OCI-LY7 (cell line): ENCODE measurements at regions of chr19 and their contacts with region 1.

Region 1: DNA sequence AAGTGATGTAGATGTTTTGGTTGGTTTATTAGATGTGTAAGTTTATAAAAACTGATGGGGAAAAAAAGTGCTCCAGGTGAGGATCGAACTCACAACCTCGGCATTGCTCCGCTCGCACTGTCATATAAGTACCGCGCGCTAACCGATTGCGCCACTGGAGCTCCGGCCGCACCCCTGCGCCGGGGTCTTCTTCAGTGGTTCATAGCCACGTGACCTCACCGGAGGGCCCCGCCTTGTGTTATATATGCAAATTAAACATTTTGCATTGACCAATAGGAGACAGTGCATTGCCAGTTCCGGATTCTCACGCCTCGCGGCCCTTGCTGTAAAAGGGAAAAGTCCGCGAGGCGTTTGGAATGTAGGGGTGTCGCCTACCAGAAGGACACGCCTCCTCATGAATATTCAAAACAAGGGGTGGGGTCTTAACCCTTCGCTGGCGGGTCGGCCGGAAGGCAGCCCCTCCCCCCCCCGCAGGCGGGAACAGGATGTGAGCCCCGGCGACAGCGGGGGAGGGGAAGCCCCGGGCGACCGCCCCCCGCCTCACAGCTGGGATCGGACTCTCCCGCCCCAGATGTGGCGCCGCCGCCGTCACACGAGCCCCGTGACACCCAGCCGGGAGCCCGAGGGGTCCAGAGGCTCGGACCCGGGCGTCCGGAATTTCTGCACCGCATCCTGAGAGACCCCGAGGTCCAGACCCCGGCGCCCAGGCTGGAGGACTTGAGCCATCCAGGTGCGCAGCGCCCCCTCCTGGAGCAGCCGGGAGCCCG is at the start of gene PLEKHG2:
- DNase-seq: peak; percentile 100
- H3K4me3 ChIP-seq: peak within 1 kb of the TSS; percentile 89
- H3K27ac ChIP-seq: peak within 1 kb of the TSS; percentile 91
- H3K4me1 ChIP-seq: peaks cover 33% of the 10 kb centered on the region
- CTCF ChIP-seq: peak; percentile 93
- total RNA-seq, gene PLEKHG2: 28.3 and 30.4 TPM in 2 replicates

Region 2: GRCh38 chr19:39125554-39126311 is 286.6 kb before region 1 on chr19 and contains the start of gene PAK4:
- CTCF ChIA-PET with region 1: no interaction called
- POLR2A ChIA-PET with region 1: no interaction called
- intact Hi-C with region 1: loop called (anchors 1 kb)
- DNase-seq: peak; percentile 98
- H3K4me3 ChIP-seq: peak within 1 kb of the TSS; percentile 77
- H3K27ac ChIP-seq: peak within 1 kb of the TSS; percentile 55
- H3K4me1 ChIP-seq: peaks cover 20% of the 10 kb centered on the region
- CTCF ChIP-seq: no peak
- total RNA-seq, gene PAK4: 7.8 and 8.1 TPM in 2 replicates

Region 3: DNA sequence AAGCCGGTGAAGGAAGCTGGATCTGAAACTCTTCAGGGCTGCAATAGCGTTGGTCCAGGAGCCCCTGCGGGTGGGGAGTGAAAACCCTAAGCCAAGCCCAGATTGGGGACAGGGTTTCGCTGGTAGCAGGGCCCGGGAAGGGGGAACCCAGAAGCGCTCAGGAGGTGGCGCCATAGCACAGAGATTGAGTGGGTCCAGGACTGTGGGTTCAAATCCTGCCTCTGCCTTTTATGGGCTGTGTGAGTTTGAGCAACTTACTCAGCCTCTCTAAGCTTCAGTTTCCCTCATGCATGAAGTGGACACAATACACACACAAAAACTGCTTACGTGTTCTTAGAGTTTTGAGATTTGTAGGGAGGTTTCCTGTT is 199.9 kb before region 1 on chr19:
- CTCF ChIA-PET with region 1: no interaction called
- POLR2A ChIA-PET with region 1: no interaction called
- intact Hi-C with region 1: loop called (anchors 1 kb)
- DNase-seq: peak; percentile 62
- H3K4me3 ChIP-seq: no peak overlapping the region
- H3K27ac ChIP-seq: no peak overlapping the region
- H3K4me1 ChIP-seq: no peaks in the 10 kb centered on the region
- CTCF ChIP-seq: peak; percentile 78

Region 4: DNA sequence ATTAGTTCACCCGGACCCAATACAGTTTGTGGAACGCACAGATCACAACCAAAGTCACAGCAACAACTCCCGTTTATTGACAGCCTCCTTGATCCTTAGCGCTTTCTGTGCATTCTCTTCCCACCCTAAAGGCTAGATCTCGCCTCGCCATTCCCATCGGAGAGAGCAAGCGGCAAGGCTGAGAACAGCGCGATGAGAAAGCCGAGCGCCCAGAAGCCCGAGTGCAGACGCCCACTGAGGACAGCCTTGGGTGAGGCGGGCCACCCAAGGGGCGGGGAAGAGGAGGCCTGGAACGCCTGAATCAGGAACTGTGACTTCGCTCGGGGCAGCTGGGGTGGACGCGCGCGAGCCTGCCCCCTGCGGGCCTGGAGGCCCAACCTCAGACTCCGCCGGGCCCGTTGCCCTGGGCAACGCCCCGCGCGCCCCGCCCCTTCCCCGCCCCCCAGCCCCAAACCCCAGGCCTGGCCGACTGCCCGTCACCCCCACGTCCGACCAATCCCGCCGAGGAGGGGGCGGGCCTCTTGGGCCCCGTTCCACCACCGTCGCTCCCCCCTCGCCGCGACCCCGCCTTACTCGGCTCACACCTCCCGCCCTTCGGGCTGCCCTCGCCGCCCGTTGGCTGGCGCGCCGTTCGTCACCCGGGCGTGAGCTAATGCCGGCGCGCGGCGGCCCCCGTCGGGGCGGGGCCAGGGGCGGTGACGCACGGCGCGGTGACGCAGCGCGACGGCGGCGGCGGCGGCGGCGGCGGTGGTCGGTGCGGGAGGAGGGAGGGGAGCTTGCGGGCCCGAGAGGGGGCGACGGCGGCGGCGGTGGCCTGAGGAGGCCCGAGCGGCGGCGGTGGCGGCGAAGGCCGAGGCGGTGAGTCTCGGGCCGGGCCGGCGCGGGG is 70.3 kb before region 1 on chr19 and contains the start of gene SAMD4B:
- CTCF ChIA-PET with region 1: no interaction called
- POLR2A ChIA-PET with region 1: interaction called, 3 read pairs
- intact Hi-C with region 1: loop called (anchors 1 kb)
- DNase-seq: peak; percentile 99
- H3K4me3 ChIP-seq: peak within 1 kb of the TSS; percentile 96
- H3K27ac ChIP-seq: peak within 1 kb of the TSS; percentile 71
- H3K4me1 ChIP-seq: peaks cover 48% of the 10 kb centered on the region
- CTCF ChIP-seq: peak; percentile 68
- total RNA-seq, gene SAMD4B: 46.2 and 59.4 TPM in 2 replicates

Region 5: GRCh38 chr19:39397360-39398296 is 14.7 kb before region 1 on chr19:
- CTCF ChIA-PET with region 1: interaction called, 3 read pairs
- POLR2A ChIA-PET with region 1: interaction called, 14 read pairs
- intact Hi-C with region 1: loop called (anchors 1 kb)
- DNase-seq: peak; percentile 89
- H3K4me3 ChIP-seq: peak overlapping the region; percentile 27
- H3K27ac ChIP-seq: peak overlapping the region; percentile 75
- H3K4me1 ChIP-seq: peaks cover 57% of the 10 kb centered on the region
- CTCF ChIP-seq: peak; percentile 88